ENCODE measurements at regions of chrX and their contacts with region 1.

Region 1: DNA sequence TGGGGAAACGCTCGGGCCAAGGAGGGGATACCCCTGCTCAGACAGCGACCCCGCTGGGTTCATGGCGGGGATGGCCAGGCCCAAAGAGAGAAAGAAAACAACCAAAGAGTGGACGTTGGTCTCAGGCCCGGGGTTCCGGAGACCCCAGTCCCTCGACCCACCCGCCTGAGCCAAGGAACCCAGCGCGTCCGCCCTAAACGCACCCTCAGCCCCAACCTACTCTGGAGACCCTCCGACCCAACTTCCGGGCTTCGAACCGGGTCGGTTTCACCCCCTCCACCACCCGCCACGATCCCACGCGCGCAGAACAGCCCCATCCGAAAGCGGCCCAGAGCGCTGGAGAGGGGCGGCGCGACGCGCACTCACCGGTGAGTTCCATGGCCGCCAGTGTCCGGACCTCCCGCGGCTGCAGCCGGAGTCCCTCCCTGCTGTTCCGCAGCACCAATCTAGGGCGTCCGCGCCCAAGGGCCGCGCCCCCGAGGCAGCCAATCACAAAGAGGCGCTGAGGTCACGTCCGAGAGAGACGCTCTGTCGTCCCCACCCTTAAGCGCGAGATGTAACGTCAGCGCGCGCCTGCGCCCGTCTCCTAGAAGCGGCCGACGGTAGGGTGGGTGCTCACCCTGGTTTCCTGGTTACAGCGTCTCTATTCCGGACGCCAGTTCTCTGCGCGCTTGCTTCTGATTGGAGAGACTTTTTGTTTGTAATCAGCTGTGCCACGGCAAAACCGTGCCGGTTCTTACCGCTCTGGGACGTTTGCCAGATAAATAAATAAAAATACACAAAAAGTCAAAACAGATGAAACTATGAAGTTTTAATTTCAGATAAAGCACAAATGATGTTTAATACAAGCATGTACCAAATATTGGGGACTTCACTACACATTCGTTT is at the start of gene PIGA:
- DNase-seq: peak; percentile 95
- ATAC-seq: peak; percentile 99
- total RNA-seq, gene PIGA: 2.9 to 6.3 TPM

Region 2: DNA sequence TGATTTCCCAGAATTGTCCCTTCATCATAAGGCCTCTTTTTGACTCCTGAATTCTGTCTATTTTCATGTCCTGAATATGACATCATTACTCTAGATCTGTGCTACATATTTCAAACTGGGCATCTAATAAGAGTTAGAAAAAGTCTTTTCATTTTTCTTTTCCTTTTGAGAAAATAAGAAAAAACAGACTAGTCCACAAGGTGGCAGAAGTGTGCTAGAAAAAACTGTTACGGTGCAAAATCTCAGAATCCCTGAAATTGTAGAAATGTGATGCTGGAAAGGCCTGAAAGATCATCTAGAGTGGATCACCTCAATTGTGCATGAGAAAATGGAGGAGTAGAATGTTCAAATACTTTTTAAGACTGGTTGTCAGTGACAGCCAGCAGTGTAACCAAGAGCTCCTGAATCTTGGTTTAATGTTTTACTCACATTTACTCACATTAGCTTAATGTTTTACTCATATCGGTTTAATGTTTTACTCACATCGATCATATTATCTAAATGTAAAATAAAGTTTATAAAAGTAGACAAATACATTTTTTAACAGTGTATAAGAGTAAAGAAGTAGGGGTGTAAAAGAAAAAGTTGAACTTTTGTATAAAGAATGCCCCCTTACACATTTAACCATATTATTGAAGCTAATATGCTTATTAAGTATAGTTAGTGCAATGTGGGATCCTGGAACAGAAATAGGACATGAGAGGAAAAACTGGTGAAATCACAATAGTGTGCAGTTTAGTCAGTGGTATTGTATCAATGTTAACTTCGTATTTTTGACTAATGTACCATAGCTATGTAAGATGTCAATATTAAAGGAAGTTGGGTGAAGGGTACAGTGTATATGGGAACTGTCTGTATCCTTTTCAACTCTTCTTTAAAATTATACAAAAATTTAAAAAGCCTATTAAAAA is 35.2 kb before region 1 on chrX:
- intact Hi-C with region 1: loop called in 1 of 2 experiments (anchors 5 kb)
- DNase-seq: no peak
- ATAC-seq: no peak